ENCODE measurements at regions of chr16 and their contacts with region 1.

Region 1: DNA sequence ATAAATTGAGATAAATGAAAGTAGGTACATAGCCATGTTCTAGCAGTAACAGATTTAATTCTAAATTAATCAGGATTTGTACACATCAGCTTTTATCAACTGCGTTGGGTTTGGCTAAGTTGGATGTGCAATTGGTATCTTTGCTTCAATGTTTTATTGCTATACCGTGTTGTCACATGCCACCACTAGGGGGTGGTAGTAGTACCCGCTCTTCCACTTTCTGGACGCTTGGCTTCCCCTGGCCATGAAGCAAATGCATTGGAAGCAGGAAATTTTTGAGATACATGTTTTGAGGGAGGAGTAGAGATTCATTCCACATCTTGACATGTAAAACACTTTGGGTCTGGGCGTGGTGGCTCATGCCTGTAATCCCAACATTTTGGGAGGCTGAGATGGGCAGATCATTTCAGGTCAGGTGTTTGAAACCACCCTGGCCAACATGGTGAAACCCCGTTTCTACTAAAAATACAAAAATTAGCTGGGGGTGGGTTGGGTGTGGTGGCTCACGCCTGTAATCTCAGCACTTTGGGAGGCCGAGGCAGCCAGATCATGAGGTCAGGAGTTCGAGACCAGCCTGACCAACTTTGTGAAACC is 58.6 kb downstream of the EMP2 start:
- DNase-seq: peak in 3 of 4 donors; percentile 59 to 84 (median 63)
- ATAC-seq: peak; percentile 93
- H3K4me3 ChIP-seq: no peak overlapping the region
- H3K27ac ChIP-seq: no peak overlapping the region
- H3K4me1 ChIP-seq: peaks cover 0 to 11% of the 10 kb centered on the region in 2 donors
- H3K27me3 ChIP-seq: no peaks in the 10 kb centered on the region
- CTCF ChIP-seq: peak; percentile 73 to 93

Region 2: GRCh38 chr16:10419712-10420111 is 102.1 kb before region 1 on chr16:
- intact Hi-C with region 1: no loop called
- DNase-seq: no peak
- ATAC-seq: no peak
- H3K4me3 ChIP-seq: no peak overlapping the region
- H3K27ac ChIP-seq: no peak overlapping the region
- H3K4me1 ChIP-seq: no peaks in the 10 kb centered on the region
- H3K27me3 ChIP-seq: no peaks in the 10 kb centered on the region
- CTCF ChIP-seq: no peak

Region 3: DNA sequence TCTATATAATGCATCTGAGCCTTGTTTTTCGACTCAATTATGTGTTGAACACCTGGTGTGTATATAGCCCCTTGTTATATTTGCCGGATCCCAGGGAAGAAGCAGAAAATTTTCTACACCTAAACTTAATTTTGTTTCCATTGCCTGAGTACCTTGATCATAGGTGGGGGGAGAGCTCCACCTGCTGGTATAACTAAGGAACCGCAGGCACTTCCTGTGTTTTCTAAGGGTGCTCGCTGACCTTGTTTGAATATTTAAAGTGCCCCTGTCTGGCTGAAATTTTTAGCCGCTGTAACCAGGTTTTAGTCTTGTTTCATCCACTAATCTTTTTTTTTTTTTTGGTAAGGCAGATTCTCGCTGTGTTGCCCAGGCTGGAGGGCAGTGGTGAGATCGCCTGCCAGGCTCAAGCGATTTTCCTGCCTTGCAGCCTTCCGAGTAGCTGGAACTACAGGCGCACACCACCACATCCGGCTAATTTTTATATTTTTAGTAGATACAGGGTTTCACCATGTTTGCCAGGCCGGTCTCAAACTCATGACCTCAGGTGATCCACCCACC is 215.4 kb after region 1 on chr16:
- intact Hi-C with region 1: loop called in 1 of 2 experiments (anchors 5 kb)
- DNase-seq: peak in 2 of 4 donors; percentile 64 to 82
- ATAC-seq: peak; percentile 92
- H3K4me3 ChIP-seq: peak overlapping the region in 1 of 2 donors; percentile 2
- H3K27ac ChIP-seq: peak overlapping the region in 1 of 2 donors; percentile 21
- H3K4me1 ChIP-seq: peaks cover 14 to 25% of the 10 kb centered on the region in 2 donors
- H3K27me3 ChIP-seq: no peaks in the 10 kb centered on the region
- CTCF ChIP-seq: peak; percentile 90 to 91